ENCODE measurements at regions of chr1 and their contacts with region 1.

Region 1: DNA sequence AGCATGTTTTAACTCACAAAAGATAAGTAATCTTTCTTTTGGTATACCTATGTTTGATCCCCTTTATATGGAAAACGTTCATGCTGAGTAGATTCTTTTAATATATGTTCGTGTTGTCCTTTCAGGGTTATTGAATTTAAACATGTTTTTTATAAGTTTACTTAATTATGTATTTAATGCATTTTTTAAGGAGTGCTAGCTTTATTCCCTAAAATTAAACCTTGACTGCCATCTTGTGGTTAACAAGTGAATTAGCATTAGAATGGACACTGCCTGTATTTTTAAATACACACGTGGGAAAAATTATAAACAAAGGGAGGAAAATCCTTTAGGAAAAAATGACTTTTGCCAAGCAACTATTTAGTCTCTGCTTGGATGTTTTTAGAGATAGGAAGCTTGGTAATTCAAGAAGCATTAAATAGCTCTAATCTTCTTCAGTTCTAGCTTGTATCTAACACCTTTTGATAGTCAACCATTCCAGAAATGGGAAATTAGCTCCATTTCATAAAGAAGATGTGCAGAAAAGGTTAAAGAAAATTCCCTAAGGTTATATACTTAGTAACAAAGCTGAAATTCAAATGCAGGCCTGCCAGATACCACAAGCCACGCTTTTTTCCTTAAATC is 43.0 kb downstream of the UBE2U start:
- DNase-seq: no peak
- H3K4me3 ChIP-seq: no peak overlapping the region
- H3K27ac ChIP-seq: no peak overlapping the region
- H3K4me1 ChIP-seq: peaks cover 0 to 6% (median 0%) of the 10 kb centered on the region in 4 donors
- H3K27me3 ChIP-seq: no peaks in the 10 kb centered on the region
- CTCF ChIP-seq: peak; percentile 79 to 87

Region 2: DNA sequence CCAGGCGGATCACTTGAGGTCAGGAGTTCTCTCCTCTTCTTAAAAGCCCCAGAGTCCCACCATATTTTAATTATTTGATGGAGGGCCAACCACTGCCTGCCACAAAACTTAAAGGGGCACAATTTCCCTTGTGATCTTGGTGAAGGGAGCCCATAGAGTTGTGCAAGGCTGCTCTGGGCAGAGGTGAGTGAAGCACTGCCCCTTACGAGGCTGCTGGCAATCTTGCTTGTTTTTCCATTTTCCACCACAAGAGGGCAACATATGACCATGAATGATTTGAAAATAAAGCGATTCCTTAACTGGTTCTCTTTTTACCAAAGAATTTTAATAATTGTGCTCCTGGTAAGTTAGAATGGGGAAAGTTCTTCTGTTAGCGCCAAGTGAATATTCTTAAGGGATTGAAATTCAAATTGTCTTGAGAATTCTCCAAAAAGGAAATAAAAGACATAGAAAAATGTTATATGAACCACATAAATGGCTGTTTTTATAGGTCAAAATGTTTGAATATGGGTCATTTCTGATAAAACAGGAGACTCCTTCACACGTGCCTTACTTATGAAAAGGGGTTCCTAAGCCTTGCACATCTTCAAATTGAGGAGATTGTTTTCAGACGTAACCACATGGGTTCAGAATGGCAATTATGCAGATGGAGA is 630.5 kb before region 1 on chr1:
- intact Hi-C with region 1: loop called (anchors 2 kb)
- DNase-seq: peak in 1 of 2 donors; percentile 76
- H3K4me3 ChIP-seq: no peak overlapping the region
- H3K27ac ChIP-seq: no peak overlapping the region
- H3K4me1 ChIP-seq: peaks cover 0 to 45% (median 7%) of the 10 kb centered on the region in 4 donors
- H3K27me3 ChIP-seq: no peaks in the 10 kb centered on the region
- CTCF ChIP-seq: peak; percentile 70 to 89

Region 3: DNA sequence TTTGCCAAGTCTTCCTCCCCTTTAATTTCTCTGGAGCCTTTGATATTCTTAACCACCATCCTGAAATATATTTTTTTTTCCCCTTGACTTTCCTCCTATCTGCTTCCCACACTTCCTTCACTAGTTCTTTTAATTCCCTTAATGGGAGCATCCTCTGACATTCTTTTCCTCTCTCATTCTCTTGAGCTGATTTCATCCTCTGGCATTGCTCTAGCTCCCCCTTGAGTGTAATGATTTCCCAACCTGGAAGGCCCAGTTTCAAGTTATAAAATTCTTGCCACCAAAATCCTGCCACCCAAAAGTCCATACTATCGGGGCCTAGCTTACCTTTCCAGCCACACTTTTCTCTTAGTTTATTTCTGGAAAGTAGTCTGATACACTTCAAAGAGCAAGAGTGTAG is 82.4 kb before region 1 on chr1:
- intact Hi-C with region 1: no loop called
- DNase-seq: no peak
- H3K4me3 ChIP-seq: no peak overlapping the region
- H3K27ac ChIP-seq: peak overlapping the region; percentile 65 to 68
- H3K4me1 ChIP-seq: peaks cover 0 to 48% (median 21%) of the 10 kb centered on the region in 4 donors
- H3K27me3 ChIP-seq: no peaks in the 10 kb centered on the region
- CTCF ChIP-seq: peak; percentile 42 to 50

Region 4: DNA sequence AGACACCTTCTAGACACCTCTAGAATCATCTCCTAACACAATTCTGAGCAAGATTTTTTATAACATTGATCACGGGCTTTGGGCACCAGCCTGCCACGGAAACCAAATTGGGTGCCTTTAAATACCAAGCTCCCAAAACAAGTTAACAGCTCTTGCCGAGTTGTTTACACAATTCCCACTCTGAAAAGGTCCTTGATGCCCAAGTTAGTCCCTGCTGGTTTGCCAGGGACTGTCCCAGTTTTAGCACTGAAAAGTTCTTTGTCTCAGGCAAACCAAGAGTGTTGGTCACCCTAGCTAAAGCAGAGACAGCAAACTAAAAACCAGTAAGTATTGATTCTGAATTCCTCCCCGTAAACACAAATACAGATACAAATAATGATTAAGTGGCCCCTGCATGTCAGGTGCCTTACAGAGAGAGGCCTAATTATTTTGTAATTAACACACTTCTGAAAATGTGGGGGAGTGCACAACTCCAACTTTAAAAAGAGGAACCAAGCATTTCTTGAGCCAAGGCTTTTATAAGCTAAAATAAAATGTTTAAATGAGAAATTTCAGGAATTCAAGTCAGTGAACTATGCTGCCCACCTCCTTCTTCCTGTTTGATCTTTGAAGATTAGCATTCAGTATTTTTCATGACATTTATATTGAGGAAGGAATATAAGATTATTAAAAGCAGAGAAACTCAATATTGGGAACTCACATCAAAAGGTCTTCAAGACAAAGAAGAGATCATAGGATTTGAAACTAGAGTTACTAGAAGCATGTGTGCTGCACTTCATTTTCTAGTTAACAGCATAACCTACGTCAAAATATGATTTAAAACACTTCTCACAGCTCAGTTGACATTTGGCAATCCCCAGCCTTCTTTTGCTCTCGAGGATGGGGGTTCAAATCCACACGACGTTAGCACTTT is 52.0 kb before region 1 on chr1:
- intact Hi-C with region 1: no loop called
- DNase-seq: no peak
- H3K4me3 ChIP-seq: no peak overlapping the region
- H3K27ac ChIP-seq: peak overlapping the region; percentile 52 to 69
- H3K4me1 ChIP-seq: peaks cover 0 to 31% (median 23%) of the 10 kb centered on the region in 4 donors
- H3K27me3 ChIP-seq: no peaks in the 10 kb centered on the region
- CTCF ChIP-seq: no peak

Region 5: GRCh38 chr1:64282354-64282753 is 35.9 kb after region 1 on chr1:
- intact Hi-C with region 1: no loop called
- DNase-seq: no peak
- H3K4me3 ChIP-seq: no peak overlapping the region
- H3K27ac ChIP-seq: no peak overlapping the region
- H3K4me1 ChIP-seq: no peaks in the 10 kb centered on the region
- H3K27me3 ChIP-seq: no peaks in the 10 kb centered on the region
- CTCF ChIP-seq: no peak